CD8-positive, alpha-beta T cell (primary cell): ENCODE measurements at regions of chr13 and their contacts with region 1.

Region 1: GRCh38 chr13:75357576-75358289 is 124.2 kb downstream of the TBC1D4 start:
- DNase-seq: peak; percentile 6 to 76 (median 46)
- ATAC-seq: peak; percentile 100
- H3K4me3 ChIP-seq: no peak overlapping the region
- H3K4me3 Mint-ChIP-seq: no peak overlapping the region
- H3K27ac ChIP-seq: no peak overlapping the region
- H3K27ac Mint-ChIP-seq: no peak overlapping the region
- H3K4me1 ChIP-seq: no peaks in the 10 kb centered on the region
- H3K4me1 Mint-ChIP-seq: peaks cover 5% of the 10 kb centered on the region
- H3K27me3 ChIP-seq: no peaks in the 10 kb centered on the region
- H3K27me3 Mint-ChIP-seq: no peaks in the 10 kb centered on the region
- CTCF ChIP-seq: peak; percentile 90

Region 2: GRCh38 chr13:74641586-74641985 is 716.1 kb before region 1 on chr13:
- CTCF ChIA-PET with region 1: no interaction called
- POLR2A ChIA-PET with region 1: no interaction called
- intact Hi-C with region 1: no loop called
- DNase-seq: no peak
- ATAC-seq: no peak
- H3K4me3 ChIP-seq: no peak overlapping the region
- H3K4me3 Mint-ChIP-seq: no peak overlapping the region
- H3K27ac ChIP-seq: no peak overlapping the region
- H3K27ac Mint-ChIP-seq: no peak overlapping the region
- H3K4me1 ChIP-seq: no peaks in the 10 kb centered on the region
- H3K4me1 Mint-ChIP-seq: no peaks in the 10 kb centered on the region
- H3K27me3 ChIP-seq: no peaks in the 10 kb centered on the region
- H3K27me3 Mint-ChIP-seq: no peaks in the 10 kb centered on the region
- CTCF ChIP-seq: no peak

Region 3: DNA sequence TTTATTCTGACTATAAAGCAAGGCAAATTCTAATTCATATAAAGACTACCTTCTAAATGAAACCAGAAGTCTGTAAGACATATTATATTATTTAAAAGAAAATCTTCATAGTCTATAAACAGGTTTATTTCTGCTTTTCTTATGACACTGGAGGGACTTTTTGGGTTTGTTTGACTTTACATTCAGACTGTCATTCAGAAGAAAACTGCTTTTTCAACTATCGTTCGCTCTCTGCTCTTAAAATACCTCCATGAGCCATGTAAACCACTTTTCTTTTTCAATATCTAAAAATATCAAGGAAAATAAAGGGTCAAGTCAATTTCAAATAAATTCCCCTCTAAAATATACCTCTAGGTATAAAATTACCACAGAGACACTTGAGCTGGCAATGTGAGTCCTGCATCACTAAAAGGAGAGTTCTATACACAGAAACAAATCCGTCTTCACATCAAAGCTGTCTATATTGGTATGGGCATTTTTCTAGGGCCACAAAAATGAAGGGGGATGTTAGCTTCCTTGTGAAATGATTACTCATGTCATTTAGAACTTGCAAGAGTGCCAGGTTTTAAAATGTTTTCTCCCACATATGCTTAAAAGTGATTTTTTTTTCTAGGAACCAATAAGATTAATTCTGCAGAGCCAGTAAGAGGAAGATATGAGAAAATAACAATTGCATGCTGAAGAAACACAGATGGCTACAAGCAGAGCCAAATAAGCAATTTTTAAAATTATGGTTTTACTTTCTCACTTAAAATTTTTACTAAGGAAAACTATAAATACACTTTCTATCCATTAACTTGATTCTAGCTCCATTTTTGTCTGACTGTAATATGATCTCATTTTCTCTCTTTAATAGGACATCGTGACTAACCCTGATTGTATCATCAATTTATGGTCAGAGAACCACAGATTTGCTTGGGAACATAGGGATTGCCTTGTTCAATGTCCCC is 57.5 kb before region 1 on chr13:
- CTCF ChIA-PET with region 1: interaction called, 4 read pairs
- POLR2A ChIA-PET with region 1: no interaction called
- intact Hi-C with region 1: loop called in 1 of 2 experiments (anchors 5 kb)
- DNase-seq: peak in 2 of 9 experiments; percentile 22 to 35
- ATAC-seq: peak; percentile 63
- H3K4me3 ChIP-seq: no peak overlapping the region
- H3K4me3 Mint-ChIP-seq: no peak overlapping the region
- H3K27ac ChIP-seq: no peak overlapping the region
- H3K27ac Mint-ChIP-seq: peak overlapping the region; percentile 18
- H3K4me1 ChIP-seq: peaks cover 5% of the 10 kb centered on the region
- H3K4me1 Mint-ChIP-seq: peaks cover 27% of the 10 kb centered on the region
- H3K27me3 ChIP-seq: no peaks in the 10 kb centered on the region
- H3K27me3 Mint-ChIP-seq: no peaks in the 10 kb centered on the region
- CTCF ChIP-seq: no peak

Region 4: DNA sequence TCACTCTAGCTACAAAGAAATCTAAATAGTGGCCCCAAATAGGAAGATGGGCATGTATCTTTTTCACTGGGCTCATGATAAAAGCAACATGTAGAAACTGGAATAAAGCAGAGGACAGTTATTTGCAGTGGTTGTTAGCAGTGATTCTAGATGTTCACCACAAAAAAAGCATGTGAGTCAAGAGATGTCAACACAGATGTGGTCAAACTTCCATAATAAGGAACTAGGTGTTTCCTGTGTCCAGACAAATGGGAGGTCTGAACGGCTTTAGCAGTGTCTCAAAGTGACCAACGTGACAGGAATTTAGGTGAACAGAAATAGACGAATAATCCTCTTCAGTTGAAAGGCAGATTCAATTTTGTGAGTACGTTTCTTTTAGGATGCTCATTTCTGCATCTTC is 38.5 kb before region 1 on chr13:
- CTCF ChIA-PET with region 1: no interaction called
- POLR2A ChIA-PET with region 1: interaction called, 3 read pairs
- intact Hi-C with region 1: loop called in 1 of 2 experiments (anchors 5 kb)
- DNase-seq: no peak
- ATAC-seq: no peak
- H3K4me3 ChIP-seq: no peak overlapping the region
- H3K4me3 Mint-ChIP-seq: no peak overlapping the region
- H3K27ac ChIP-seq: no peak overlapping the region
- H3K27ac Mint-ChIP-seq: no peak overlapping the region
- H3K4me1 ChIP-seq: peaks cover 42% of the 10 kb centered on the region
- H3K4me1 Mint-ChIP-seq: peaks cover 64% of the 10 kb centered on the region
- H3K27me3 ChIP-seq: no peaks in the 10 kb centered on the region
- H3K27me3 Mint-ChIP-seq: no peaks in the 10 kb centered on the region
- CTCF ChIP-seq: no peak

Region 5: GRCh38 chr13:75333103-75333502 is 24.6 kb before region 1 on chr13:
- CTCF ChIA-PET with region 1: interaction called, 13 read pairs
- POLR2A ChIA-PET with region 1: no interaction called
- intact Hi-C with region 1: loop called in 1 of 2 experiments (anchors 2 kb)
- DNase-seq: no peak
- ATAC-seq: no peak
- H3K4me3 ChIP-seq: no peak overlapping the region
- H3K4me3 Mint-ChIP-seq: no peak overlapping the region
- H3K27ac ChIP-seq: no peak overlapping the region
- H3K27ac Mint-ChIP-seq: no peak overlapping the region
- H3K4me1 ChIP-seq: no peaks in the 10 kb centered on the region
- H3K4me1 Mint-ChIP-seq: peaks cover 2% of the 10 kb centered on the region
- H3K27me3 ChIP-seq: no peaks in the 10 kb centered on the region
- H3K27me3 Mint-ChIP-seq: no peaks in the 10 kb centered on the region
- CTCF ChIP-seq: no peak

Region 6: GRCh38 chr13:75621147-75621546 is 263.4 kb after region 1 on chr13:
- CTCF ChIA-PET with region 1: no interaction called
- POLR2A ChIA-PET with region 1: no interaction called
- intact Hi-C with region 1: no loop called
- DNase-seq: no peak
- ATAC-seq: no peak
- H3K4me3 ChIP-seq: no peak overlapping the region
- H3K4me3 Mint-ChIP-seq: no peak overlapping the region
- H3K27ac ChIP-seq: no peak overlapping the region
- H3K27ac Mint-ChIP-seq: no peak overlapping the region
- H3K4me1 ChIP-seq: no peaks in the 10 kb centered on the region
- H3K4me1 Mint-ChIP-seq: no peaks in the 10 kb centered on the region
- H3K27me3 ChIP-seq: no peaks in the 10 kb centered on the region
- H3K27me3 Mint-ChIP-seq: no peaks in the 10 kb centered on the region
- CTCF ChIP-seq: no peak